Endothelial cell of umbilical vein (primary cell): ENCODE measurements at regions of chr17 and their contacts with region 1.

Region 1: DNA sequence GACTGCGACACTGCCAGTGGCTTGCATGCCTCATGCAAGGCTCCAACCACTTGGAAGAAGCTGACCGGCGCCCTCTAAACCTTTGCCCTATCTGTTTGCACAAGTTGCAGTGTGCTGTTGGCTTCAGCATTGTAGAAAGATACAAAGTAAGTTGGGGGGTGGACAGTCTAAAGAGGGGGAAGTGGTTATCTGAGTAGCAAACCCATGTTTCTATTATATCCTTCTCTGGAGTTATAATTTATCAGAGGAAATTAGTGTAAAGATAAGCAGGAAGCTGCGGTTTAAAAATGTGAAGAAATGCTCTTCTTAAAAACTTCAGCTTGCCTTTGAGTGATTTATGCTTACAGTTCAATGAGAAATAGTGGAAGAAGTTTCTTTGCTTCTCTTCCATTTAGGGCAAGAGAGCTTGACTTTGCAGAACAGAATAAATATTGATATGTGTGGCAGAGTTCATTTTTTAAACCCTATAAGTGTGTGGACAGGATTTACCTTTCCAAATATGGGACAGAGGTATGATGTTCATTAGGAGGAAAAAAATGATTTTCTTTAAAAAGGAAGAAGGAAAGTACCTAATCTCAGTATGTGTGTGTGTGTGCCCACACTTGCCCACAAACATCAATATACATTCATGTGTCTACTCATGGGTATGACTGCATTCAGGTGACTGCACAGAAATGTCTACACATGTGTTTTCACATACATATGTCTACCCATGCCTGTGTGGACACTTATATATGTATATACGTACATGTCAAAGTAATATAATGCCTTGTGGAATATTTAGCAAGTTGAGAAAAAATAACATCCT is 8.1 kb downstream of the AMZ2 start:
- DNase-seq: no peak
- H3K4me3 ChIP-seq: no peak overlapping the region
- H3K27ac ChIP-seq: no peak overlapping the region
- H3K4me1 ChIP-seq: peaks cover 20% of the 10 kb centered on the region
- H3K27me3 ChIP-seq: no peaks in the 10 kb centered on the region
- CTCF ChIP-seq: no peak
- POLR2A ChIP-seq: no peak

Region 2: DNA sequence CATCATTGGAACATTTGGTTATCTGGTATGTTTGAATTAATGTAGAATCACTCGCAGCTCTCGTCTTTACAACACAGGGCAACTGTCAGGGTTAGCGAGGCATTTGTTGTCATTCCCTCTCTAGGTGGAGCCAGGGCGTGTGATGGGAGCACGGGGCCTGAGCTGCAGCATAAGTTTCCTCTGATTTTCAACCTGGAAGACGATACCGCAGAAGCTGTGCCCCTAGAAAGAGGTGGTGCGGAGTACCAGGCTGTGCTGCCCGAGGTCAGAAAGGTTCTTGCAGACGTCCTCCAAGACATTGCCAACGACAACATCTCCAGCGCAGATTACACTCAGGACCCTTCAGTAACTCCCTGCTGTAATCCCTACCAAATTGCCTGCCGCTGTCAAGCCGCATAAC is 164.1 kb after region 1 on chr17:
- CTCF ChIA-PET with region 1: no interaction called
- POLR2A ChIA-PET with region 1: no interaction called
- dilution Hi-C with region 1: no loop called
- intact Hi-C with region 1: no loop called
- DNase-seq: no peak
- H3K4me3 ChIP-seq: no peak overlapping the region
- H3K27ac ChIP-seq: no peak overlapping the region
- H3K4me1 ChIP-seq: no peaks in the 10 kb centered on the region
- H3K27me3 ChIP-seq: no peaks in the 10 kb centered on the region
- CTCF ChIP-seq: no peak
- POLR2A ChIP-seq: no peak

Region 3: DNA sequence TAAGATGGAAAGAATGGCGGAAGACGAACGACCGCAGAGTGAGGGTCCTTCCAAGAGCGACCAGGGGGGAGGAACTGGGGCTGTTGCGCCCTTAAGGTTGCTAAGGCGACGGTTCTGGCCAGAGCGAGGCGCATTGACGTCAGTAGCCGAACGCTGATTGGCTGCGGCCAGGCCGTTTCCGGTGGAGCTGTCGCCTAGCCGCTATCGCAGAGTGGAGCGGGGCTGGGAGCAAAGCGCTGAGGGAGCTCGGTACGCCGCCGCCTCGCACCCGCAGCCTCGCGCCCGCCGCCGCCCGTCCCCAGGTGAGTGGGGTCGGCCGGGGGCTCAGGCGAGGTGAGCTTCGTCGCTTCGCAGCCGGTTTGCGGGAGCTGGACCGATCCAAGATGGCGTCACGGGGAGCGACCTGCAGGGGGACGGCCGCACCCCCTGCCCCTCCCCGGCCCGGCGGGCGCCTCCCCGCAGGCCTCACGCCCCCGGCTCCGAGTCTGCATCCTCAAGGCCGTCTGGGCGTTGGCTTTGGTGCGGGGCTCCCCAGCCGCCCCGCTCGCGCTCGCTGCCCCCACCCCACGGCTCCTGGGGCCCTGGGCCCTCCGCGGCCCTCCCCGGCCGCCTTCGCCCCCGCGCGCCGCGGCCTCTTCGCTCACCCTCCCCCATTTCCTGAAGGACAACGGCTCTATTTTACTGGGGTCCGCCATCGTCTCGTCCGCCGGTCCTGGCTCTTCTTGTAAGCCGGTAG is 256.5 kb after region 1 on chr17 and contains the start of gene PRKAR1A:
- CTCF ChIA-PET with region 1: no interaction called
- POLR2A ChIA-PET with region 1: no interaction called
- dilution Hi-C with region 1: no loop called
- intact Hi-C with region 1: loop called (anchors 5 kb)
- DNase-seq: peak; percentile 95
- H3K4me3 ChIP-seq: peak within 1 kb of the TSS; percentile 61 to 84 (median 83)
- H3K27ac ChIP-seq: peak within 1 kb of the TSS; percentile 86
- H3K4me1 ChIP-seq: peaks cover 18% of the 10 kb centered on the region
- H3K27me3 ChIP-seq: no peaks in the 10 kb centered on the region
- CTCF ChIP-seq: no peak
- POLR2A ChIP-seq: peak; percentile 92
- total RNA-seq, gene PRKAR1A: 238 and 257 TPM in 2 replicates